ENCODE measurements at regions of chr10 and their contacts with region 1.

Region 1: GRCh38 chr10:33273295-33274002 is 61.0 kb downstream of the NRP1 start:
- DNase-seq: peak; percentile 93
- H3K4me3 ChIP-seq: no peak overlapping the region
- H3K27ac ChIP-seq: peak overlapping the region; percentile 85
- H3K4me1 ChIP-seq: peaks cover 46% of the 10 kb centered on the region
- H3K27me3 ChIP-seq: no peaks in the 10 kb centered on the region
- CTCF ChIP-seq: peak in 1 of 2 donors; percentile 28
- POLR2A ChIP-seq: peak; percentile 51

Region 2: DNA sequence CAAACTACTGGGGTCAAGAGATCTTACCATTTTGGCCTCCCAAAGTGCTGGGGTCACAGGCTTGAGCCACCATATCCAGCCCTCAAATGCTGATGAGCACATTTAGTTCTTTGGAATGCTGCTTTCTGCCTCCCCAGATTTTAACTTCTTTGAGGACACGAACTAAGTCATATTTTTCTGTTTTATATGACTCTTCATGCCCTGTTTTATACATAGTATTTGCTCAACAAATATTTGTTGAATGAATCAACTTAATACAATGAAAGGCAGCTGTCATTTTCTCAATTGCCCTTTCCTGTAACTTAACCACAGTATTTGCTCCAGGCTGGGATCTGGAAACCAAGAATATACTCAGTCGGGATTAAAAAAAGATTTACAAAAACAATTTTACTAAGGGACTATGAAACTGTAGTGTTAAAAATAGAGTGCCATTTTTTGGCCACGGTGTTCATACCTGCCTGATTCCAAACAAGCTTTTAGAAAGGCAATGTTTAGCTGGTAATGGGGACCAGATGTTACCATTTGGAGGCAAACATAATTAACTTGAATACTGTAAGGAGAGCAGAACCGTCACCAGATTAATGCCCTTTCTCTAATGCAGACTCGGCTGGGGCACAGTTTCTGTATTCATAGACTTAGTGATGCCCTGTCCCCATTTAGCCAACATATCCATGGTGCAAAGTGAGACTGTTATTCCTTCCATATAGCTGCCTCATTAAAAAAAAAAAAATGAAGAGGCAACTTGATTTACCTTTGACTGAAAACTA is 56.6 kb before region 1 on chr10:
- CTCF ChIA-PET with region 1: no interaction called
- POLR2A ChIA-PET with region 1: no interaction called
- dilution Hi-C with region 1: no loop called
- intact Hi-C with region 1: no loop called
- DNase-seq: peak; percentile 60
- H3K4me3 ChIP-seq: no peak overlapping the region
- H3K27ac ChIP-seq: peak overlapping the region; percentile 94
- H3K4me1 ChIP-seq: peaks cover 48% of the 10 kb centered on the region
- H3K27me3 ChIP-seq: no peaks in the 10 kb centered on the region
- CTCF ChIP-seq: no peak
- POLR2A ChIP-seq: no peak

Region 3: DNA sequence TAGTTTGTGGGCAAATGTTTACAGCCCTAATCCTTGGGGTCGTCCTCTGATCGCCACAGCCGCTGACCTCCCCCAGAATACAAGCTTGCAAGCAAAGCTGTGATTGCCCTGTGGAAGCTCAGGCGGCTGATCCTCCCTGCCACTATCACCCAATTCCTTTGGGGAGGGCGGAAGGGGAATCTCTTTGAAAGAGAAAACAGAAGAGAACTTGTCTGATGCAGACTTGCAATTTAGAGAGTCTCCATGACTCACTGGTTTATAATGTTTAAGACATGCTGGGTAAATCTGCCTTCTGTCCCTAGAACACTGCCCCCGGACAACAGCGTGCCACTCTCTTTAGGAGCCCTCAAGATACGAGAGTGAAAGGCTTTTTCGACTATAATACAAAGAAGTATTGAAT is 14.5 kb before region 1 on chr10:
- CTCF ChIA-PET with region 1: interaction called, 11 read pairs
- POLR2A ChIA-PET with region 1: interaction called, 3 read pairs
- dilution Hi-C with region 1: no loop called
- intact Hi-C with region 1: loop called (anchors 1 kb)
- DNase-seq: no peak
- H3K4me3 ChIP-seq: no peak overlapping the region
- H3K27ac ChIP-seq: no peak overlapping the region
- H3K4me1 ChIP-seq: peaks cover 48% of the 10 kb centered on the region
- H3K27me3 ChIP-seq: no peaks in the 10 kb centered on the region
- CTCF ChIP-seq: no peak
- POLR2A ChIP-seq: no peak

Region 4: DNA sequence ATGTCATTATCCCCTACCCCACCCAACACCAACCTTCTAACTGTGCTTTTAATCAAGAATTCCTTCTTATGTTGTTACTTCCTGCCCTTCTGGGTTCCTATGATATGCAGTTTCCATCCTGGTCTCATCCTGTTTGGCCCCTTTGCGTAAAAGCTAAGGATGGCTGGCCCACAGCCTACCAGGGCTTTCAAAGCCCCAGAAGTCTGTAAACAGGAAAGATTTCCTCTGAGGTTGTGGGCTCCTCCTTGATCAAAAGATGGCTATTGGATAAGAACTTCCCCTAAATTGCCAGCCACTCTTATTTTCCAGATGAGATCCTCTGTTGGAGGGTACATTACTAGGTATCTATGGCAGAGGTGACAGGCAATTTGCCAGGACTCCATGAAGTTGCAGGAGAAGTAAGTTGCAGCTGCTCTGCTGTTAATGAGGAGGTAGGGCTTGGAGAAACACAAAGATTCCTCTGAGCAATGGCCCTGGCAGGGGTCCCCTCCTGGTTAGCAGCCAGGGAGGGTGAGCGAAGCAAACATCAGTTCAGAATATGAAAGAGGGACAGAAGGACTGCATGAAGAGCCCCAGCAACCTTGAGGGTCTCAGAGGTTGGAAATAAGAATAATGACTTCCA is 28.9 kb after region 1 on chr10:
- CTCF ChIA-PET with region 1: interaction called, 3 read pairs
- POLR2A ChIA-PET with region 1: no interaction called
- dilution Hi-C with region 1: no loop called
- intact Hi-C with region 1: loop called (anchors 2 kb)
- DNase-seq: peak; percentile 71
- H3K4me3 ChIP-seq: no peak overlapping the region
- H3K27ac ChIP-seq: peak overlapping the region; percentile 30
- H3K4me1 ChIP-seq: peaks cover 34% of the 10 kb centered on the region
- H3K27me3 ChIP-seq: no peaks in the 10 kb centered on the region
- CTCF ChIP-seq: no peak
- POLR2A ChIP-seq: no peak

Region 5: DNA sequence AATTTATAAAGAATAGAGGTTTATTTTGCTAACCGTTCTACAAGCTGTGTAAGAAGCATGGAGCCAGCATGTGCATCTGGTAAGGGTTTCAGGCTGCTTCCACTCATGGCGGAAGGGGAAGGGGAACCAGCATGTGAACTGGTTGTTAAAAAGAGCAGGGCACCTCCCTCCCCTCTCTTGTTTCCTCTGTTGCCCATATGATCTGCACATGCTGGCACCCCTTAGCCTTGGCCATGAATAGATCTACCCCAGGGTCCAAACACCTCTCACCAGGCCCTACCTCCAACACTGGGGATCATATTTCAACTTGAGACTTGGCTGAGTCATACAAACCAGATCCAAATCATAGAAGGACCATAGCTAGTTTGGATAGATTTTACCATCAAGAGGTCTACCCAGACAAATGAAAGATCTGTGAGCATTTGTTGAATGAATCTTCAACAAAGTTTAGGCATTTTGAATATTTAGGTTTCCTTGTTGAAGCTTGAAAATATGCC is 97.0 kb after region 1 on chr10:
- CTCF ChIA-PET with region 1: no interaction called
- POLR2A ChIA-PET with region 1: no interaction called
- dilution Hi-C with region 1: no loop called
- intact Hi-C with region 1: no loop called
- DNase-seq: no peak
- H3K4me3 ChIP-seq: no peak overlapping the region
- H3K27ac ChIP-seq: no peak overlapping the region
- H3K4me1 ChIP-seq: peaks cover 11% of the 10 kb centered on the region
- H3K27me3 ChIP-seq: no peaks in the 10 kb centered on the region
- CTCF ChIP-seq: no peak
- POLR2A ChIP-seq: no peak

Region 6: DNA sequence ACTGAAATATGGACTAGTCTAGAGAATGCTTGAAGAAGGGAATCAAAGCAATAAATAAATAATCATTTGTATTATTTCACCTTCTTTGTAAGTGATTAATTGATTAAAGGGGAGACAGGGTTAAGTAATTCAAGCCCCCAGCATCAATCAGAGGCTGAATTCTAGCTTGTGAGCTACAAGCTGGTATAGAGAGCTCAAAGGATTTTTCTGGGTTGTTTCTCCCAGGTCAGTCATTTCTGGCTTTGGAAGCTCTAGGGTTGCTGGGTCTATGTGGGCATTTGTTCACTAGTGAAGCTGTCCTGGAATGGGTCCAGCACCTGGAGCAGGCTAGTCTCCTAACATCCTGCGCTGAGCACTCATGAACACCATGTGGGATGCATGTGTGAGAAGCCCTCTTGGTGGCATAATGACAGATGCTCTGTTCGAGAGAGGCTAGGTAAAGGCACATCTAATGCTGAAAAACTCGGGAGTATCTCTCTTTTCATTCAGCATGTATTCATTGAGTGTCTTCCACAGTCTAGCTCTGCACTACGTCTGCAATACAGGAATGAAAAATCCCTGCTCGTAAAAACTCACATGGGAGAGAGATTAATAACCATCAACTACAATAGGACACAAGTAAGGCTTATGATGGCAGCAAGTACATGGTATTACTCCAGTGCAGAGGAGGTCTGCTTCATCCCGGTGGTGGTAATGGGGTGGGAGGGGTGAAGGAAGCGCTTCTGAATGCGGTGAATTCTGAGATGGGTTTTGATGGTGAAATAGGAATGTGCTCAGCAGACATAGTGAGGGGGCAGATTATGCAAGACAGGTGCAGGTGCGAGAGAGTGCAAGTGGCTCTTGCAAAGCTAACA is 129.0 kb after region 1 on chr10:
- CTCF ChIA-PET with region 1: no interaction called
- POLR2A ChIA-PET with region 1: no interaction called
- dilution Hi-C with region 1: no loop called
- intact Hi-C with region 1: no loop called
- DNase-seq: no peak
- H3K4me3 ChIP-seq: no peak overlapping the region
- H3K27ac ChIP-seq: no peak overlapping the region
- H3K4me1 ChIP-seq: no peaks in the 10 kb centered on the region
- H3K27me3 ChIP-seq: peaks cover 0 to 8% of the 10 kb centered on the region in 2 experiments
- CTCF ChIP-seq: no peak
- POLR2A ChIP-seq: no peak